ENCODE measurements at regions of chr16 and their contacts with region 1.

Region 1: DNA sequence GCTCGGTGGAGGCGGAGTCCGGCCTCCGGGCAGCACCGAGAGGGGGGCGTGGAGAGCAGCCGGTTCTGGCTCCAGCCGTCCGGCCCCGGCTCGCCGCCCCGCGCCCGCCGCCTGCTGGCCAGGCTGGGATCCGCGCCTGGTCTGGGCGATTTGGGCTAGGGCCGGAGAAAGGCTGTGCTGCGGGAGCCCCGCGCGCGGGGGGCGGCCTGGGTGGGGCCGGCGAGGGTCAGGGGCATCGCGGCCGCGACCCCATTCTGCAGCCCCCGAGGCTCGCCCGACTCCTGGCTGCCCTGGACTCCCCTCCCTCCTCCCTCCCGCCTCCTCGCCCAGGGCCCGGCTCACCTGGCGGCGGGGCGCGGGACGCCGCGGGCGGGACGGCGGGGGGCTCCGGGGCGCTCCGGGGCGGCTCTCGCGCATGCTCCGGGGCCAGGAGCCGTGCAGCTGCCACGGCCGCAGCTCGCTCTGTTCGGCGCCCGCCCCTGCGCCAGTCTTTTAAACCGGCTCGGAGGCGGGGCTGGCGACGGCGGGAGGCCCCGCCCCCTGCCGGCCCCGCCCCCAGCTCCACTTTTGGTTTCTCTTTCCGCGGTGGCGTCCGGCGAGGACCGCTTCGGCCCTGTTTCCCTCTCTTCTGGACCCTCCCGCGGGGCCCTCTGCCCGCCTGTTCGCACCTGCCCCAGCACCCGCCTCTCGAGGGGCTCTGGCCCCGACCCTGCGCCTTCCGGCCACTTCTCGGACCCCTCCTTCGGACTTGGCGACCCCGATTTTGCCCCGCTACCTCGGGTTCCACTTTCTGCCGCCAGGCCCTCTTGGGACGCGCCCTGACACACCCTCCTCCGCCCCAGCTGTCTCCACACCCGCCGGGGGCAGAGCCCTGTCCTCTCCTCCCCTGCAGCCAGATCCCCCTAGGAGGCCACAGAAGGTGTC is at the start of gene SOCS1:
- DNase-seq: peak; percentile 96
- total RNA-seq, gene SOCS1: 1.7 TPM

Region 2: GRCh38 chr16:10862432-10862831 is 393.6 kb before region 1 on chr16:
- intact Hi-C with region 1: no loop called
- DNase-seq: no peak

Region 3: GRCh38 chr16:10971560-10971961 is 284.4 kb before region 1 on chr16:
- intact Hi-C with region 1: loop called (anchors 1 kb)
- DNase-seq: no peak

Region 4: GRCh38 chr16:11100239-11100750 is 155.7 kb before region 1 on chr16:
- intact Hi-C with region 1: loop called (anchors 2 kb)
- DNase-seq: no peak

Region 5: GRCh38 chr16:11232852-11233726 is 22.9 kb before region 1 on chr16:
- intact Hi-C with region 1: no loop called
- DNase-seq: peak; percentile 81

Region 6: GRCh38 chr16:11297492-11298142 is 41.6 kb after region 1 on chr16:
- intact Hi-C with region 1: loop called (anchors 5 kb)
- DNase-seq: peak; percentile 91

Region 7: DNA sequence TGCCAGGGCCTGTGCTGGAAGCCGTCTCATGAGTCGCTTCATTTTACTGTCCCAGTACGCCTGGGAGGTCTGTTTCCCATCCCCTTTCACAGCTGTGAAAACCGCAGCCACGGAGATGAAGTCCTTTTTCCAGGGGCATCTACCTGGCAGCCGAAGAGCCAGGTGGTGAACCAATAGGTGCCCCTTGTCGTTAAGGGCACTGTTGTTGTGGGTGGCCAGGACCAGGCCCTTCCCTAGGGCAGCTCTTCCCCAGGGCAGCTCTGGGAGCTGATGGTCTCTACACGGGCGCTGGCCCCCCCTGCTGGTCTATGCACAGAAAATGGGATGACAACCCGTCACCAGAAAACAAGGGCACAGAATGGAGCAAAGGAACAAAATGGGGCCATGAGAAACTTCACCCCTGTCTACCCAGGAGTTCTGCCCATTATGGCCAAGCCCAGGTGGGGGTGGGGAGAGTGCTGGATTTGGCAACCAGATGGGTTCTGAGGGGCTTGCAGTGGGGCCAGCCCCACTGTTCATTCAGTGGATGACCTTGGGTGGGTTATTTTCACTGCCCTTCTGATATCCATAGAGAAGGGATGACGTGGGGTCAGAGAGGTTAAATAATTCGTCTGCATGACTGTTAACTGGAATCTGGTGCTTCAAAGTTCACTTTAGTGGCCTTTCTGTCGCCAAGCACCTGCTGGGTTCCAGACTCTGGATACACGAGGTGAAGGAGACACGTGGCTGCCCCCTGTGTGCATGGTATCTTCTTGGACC is 100.8 kb after region 1 on chr16:
- intact Hi-C with region 1: loop called (anchors 2 kb)
- DNase-seq: peak; percentile 84

Measured in cardiac septum (tissue), 1 donor.